AG04449 (cell line): ENCODE measurements at regions of chr10 and their contacts with region 1.

Region 1: DNA sequence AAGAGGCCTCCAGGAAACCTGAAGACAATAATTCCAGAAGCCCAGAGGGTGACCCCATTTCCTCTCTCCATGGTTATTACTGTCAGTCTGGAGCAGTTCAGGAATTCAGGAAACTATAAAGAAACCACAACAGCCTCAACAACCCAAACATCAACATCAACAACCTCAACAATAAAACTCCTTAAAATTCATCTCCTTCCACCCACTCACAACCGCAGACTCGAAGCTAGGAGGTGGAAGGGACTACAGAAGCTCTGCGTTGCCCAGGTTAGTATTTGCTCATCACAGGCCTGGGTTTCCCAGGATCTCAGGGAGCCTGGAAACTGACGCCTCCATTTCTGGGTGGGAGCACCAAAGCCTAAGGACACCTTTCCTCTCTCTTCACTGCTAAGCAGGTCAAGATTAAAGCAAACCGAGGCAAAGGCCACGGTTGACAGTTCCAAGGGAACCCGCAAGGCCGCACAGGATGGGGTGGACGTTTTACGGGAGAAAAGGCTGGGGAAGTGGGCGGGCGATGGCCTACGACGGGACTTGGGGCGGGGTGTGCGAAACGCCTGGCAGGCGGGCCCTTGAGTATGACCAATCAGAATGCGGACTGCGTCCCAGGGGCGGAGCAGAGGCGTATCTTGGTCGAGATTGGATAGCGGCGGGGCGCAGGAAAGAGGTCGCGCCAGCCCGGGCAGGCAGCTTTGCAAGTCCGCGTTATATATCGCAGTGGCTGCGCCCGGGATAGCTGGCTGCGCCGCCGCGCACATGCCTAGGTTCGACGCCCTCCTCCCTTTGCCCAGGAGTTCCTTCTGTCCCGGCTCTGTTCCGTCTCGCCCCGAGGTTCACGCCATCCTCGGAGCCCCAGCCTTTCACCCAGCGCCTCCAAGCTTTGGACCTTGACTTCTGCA is at the start of gene ELOVL3:
- DNase-seq: peak; percentile 56
- H3K4me3 ChIP-seq: peak within 1 kb of the TSS; percentile 45
- CTCF ChIP-seq: no peak

Region 2: GRCh38 chr10:102167861-102168260 is 58.0 kb before region 1 on chr10:
- CTCF ChIA-PET with region 1: interaction called, 87 read pairs
- POLR2A ChIA-PET with region 1: no interaction called
- DNase-seq: no peak
- H3K4me3 ChIP-seq: no peak overlapping the region
- CTCF ChIP-seq: no peak

Region 3: DNA sequence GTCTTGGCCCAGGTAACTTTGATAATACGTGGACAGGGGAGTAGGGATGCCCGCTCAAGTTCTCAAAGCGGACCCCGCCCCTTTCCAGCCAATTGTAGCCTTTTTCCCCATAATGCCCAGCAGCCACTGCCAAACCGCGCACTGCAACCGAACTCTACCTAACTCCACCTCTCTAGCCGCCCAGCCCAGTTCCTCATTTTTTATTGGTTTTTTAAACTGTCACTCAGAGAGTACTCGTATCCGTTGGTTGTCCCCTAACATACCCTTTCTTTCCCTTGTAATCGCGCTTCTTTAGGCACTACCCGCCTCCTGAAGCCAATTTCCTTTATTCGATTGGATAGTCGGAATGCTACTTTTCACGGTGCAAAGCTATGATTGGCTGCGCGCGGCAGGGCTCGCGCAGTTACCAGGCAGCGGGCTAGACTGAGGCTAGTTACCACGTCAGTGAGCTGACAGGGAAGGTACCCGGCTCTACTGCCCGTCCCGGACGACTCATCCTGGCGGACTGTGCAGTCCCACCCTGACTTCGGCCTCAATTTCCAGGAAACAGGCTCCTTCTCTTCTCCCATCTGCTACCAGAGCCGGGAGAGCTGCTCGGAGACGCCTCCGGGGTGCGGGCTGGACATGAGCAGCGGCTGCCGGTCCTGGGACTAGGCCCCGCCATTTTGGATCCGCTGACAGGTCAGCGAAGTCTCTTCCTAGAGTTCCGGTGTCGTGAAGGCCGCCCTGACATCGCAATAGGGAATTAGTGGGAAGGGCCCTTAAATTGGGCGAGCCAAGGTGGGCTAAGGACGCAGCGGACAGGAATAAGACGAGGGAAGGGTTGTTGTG is 19.4 kb after region 1 on chr10 and contains the start of gene GBF1:
- CTCF ChIA-PET with region 1: interaction called, 68 read pairs
- POLR2A ChIA-PET with region 1: interaction called, 4 read pairs
- DNase-seq: peak; percentile 99
- H3K4me3 ChIP-seq: peak within 1 kb of the TSS; percentile 98
- CTCF ChIP-seq: no peak

Region 4: DNA sequence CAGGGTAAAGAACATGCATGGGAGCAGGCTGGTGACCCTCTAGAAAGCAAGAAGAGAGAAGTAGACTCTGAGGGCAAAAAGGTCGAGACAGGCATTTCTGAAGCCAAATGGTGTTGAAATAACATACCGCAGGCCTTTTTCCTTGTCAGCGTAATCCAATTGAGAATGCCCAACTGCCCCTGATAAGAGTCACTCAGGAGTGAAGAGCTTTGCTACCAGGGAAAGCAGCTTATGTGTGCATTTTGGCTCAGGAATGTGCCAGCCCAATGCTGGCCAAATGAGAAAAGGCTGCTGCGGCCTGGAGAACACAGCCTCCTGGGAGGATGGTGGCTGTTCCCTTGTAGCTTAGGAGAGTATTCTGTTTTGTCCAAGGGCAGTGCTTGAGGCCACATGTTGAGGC is 108.2 kb after region 1 on chr10:
- CTCF ChIA-PET with region 1: interaction called, 16 read pairs
- POLR2A ChIA-PET with region 1: no interaction called
- DNase-seq: no peak
- H3K4me3 ChIP-seq: no peak overlapping the region
- CTCF ChIP-seq: no peak

Region 5: DNA sequence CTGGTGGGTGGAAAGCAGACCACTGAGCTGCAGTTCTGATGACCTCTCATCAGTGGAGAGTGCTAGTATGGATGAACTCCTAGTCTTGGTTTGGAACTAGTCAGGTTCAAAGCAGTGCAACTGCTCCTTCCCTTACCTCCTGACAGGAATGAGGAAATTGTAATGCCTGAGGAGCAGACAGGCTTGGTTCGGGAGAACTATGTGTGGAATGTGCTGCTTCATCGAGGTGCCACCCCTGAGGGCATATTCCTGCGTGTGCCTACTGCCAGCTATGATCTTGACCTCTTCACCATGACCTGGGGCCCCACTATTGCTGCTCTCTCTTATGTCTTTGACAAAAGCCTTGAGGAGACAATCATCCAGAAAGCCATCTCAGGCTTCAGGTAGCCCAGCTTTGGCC is 142.2 kb after region 1 on chr10:
- CTCF ChIA-PET with region 1: interaction called, 942 read pairs
- POLR2A ChIA-PET with region 1: no interaction called
- DNase-seq: no peak
- H3K4me3 ChIP-seq: no peak overlapping the region
- CTCF ChIP-seq: no peak

Region 6: DNA sequence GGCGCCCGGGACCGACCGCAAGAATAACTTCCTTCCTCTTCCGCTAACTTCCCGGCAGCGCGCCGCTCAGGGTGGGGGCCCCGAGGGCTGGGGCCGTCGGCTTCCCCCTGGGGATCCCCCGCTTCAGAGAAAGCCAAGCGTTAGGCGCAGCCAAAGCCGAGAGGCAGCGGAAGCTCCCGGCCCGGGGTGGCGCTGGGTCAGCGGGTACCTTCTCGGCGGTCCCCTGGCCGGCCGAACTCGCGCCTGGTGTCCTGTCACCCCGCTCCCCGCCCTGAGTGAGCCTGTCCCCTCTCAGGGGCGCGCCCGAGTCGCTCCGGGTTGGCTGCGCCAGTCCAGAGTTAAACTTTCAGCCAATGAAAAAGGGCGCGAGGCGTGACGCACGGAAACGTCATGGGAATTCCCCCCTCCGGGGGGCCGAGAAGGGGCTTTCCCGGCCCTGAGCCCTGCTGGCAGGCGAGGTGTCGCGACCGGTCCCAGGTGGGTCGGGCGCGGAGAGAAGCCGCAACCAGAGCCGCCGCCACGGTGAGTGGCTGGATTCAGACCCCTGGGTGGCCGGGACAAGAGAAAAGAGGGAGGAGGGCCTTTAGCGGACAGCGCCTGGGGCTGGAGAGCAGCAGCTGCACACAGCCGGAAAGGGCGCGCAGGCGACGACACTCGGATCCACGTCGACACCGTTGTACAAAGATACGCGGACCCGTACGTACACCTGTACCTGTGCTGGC is 168.3 kb after region 1 on chr10:
- CTCF ChIA-PET with region 1: interaction called, 407 read pairs
- POLR2A ChIA-PET with region 1: interaction called, 3 read pairs
- DNase-seq: peak; percentile 70
- H3K4me3 ChIP-seq: peak overlapping the region; percentile 78
- CTCF ChIP-seq: no peak

Region 7: DNA sequence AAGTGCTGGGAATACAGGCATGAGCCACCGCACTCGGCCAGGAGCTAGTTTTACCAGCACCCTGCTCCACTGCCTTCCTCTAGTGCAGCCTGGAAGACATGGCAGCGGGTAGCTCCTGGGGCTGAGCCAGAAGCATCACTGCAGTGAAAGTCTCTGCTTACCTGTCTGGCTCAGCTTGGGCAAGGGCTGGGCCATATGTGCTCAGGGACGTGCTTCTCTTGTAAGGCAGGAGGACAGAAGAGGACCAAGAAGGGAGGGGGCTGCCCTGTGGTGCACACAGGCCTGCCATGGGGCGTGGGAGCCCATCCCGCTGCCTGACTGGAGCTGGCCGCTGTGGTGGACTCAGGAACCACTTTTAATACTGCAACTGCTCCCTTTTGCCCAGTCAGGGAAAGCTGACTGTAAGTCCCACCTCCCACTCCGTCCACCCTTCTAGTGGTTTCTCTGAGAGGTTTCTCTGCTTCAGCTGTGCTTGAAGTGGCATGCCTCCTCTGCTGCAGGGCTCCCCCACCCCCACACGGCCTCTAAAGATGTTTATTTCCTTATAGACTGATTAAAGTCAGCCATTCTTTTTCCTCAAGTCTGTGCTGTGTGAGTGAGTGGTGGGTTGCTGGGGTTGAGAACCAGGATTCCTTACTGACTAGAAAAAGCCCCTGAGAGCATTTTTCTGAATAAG is 250.7 kb after region 1 on chr10:
- CTCF ChIA-PET with region 1: interaction called, 10 read pairs
- POLR2A ChIA-PET with region 1: no interaction called
- DNase-seq: no peak
- H3K4me3 ChIP-seq: no peak overlapping the region
- CTCF ChIP-seq: no peak